Ovary (tissue), 10 donors: ENCODE measurements at regions of chr10 and their contacts with region 1.

Region 1: GRCh38 chr10:114470956-114471905 is 66.9 kb upstream of the AFAP1L2 start:
- DNase-seq: peak; percentile 58 to 76 (median 72)
- H3K4me3 ChIP-seq: no peak overlapping the region
- H3K27ac ChIP-seq: peak overlapping the region; percentile 15 to 43
- H3K4me1 ChIP-seq: peaks cover 2% of the 10 kb centered on the region
- H3K27me3 ChIP-seq: no peaks in the 10 kb centered on the region
- CTCF ChIP-seq: peak; percentile 68 to 82 (median 79)
- EP300 ChIP-seq: no peak
- POLR2A ChIP-seq: no peak

Region 2: GRCh38 chr10:113854011-113854760 is 617.0 kb before region 1 on chr10 and contains the starts of genes DCLRE1A and NHLRC2:
- intact Hi-C with region 1: no loop called
- DNase-seq: peak; percentile 72 to 84 (median 78)
- H3K4me3 ChIP-seq: peak within 1 kb of the TSS; percentile 90
- H3K27ac ChIP-seq: peak within 1 kb of the TSS; percentile 83
- H3K4me1 ChIP-seq: peaks cover 6% of the 10 kb centered on the region
- H3K27me3 ChIP-seq: no peaks in the 10 kb centered on the region
- CTCF ChIP-seq: no peak
- EP300 ChIP-seq: no peak
- POLR2A ChIP-seq: peak; percentile 37
- total RNA-seq, gene DCLRE1A: 4.0 to 8.0 (median 5.7) TPM
- total RNA-seq, gene NHLRC2: 38.0 to 71.7 (median 43.9) TPM

Region 3: GRCh38 chr10:114541081-114541796 is 70.0 kb after region 1 on chr10:
- intact Hi-C with region 1: loop called in 2 of 4 experiments (anchors 5 kb)
- DNase-seq: peak; percentile 76 to 90 (median 78)
- H3K4me3 ChIP-seq: no peak overlapping the region
- H3K27ac ChIP-seq: peak overlapping the region; percentile 59 to 81
- H3K4me1 ChIP-seq: peaks cover 14% of the 10 kb centered on the region
- H3K27me3 ChIP-seq: no peaks in the 10 kb centered on the region
- CTCF ChIP-seq: no peak
- EP300 ChIP-seq: no peak
- POLR2A ChIP-seq: peak; percentile 14

Region 4: GRCh38 chr10:114779803-114780609 is 308.8 kb after region 1 on chr10:
- intact Hi-C with region 1: loop called in 1 of 4 experiments (anchors 10 kb)
- DNase-seq: no peak
- H3K4me3 ChIP-seq: no peak overlapping the region
- H3K27ac ChIP-seq: peak overlapping the region in 1 of 2 donors; percentile 13
- H3K4me1 ChIP-seq: peaks cover 3% of the 10 kb centered on the region
- H3K27me3 ChIP-seq: no peaks in the 10 kb centered on the region
- CTCF ChIP-seq: no peak
- EP300 ChIP-seq: no peak
- POLR2A ChIP-seq: no peak